H1 (cell line): ENCODE measurements at regions of chr5 and their contacts with region 1.

Region 1: DNA sequence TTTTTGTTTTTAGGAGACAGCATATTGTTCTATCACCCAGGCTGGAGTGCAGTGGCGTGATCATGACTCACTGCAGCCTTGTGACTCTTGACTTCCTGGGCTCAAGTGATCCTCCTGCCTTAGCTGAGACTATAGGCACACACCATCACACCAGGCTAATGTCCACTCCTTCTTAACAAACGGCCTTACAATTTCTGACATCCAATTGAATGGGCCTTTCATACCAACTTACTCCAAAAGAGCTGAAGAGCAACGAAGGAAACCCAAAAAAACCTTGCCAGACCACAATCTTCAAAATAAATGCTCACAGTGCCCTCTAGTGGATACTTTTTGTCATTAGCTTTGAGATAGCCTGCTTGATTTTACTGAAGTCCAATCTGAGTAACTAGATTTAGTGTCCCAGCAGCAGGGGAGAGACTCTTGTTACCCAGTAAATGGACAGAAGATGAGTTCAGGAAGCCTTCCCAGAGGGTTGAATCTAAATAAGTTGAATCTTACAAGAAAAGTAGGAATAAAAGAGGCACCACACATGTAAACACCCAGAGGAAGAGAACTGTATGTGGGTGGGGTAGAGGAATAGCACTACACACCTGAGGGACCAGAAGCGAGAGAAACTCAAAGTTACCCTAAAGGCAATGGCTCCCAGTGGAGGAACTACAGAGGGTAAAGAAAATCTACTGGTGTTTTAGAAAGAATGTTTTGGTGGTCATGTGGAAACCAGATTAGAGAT is 9.3 kb downstream of the ZNF622 start:
- DNase-seq: no peak
- H3K4me3 ChIP-seq: no peak overlapping the region
- H3K27ac ChIP-seq: no peak overlapping the region
- H3K4me1 ChIP-seq: peaks cover 0 to 3% (median 0%) of the 10 kb centered on the region in 4 experiments; a peak in 1 of 7 replicates
- H3K27me3 ChIP-seq: no peaks in the 10 kb centered on the region
- CTCF ChIP-seq: peak in 2 of 3 experiments; percentile 56 to 63; a peak in 3 of 4 replicates
- EP300 ChIP-seq: no peak
- POLR2A ChIP-seq: no peak
- RAD21 ChIP-seq: peak; percentile 85 to 87

Region 2: DNA sequence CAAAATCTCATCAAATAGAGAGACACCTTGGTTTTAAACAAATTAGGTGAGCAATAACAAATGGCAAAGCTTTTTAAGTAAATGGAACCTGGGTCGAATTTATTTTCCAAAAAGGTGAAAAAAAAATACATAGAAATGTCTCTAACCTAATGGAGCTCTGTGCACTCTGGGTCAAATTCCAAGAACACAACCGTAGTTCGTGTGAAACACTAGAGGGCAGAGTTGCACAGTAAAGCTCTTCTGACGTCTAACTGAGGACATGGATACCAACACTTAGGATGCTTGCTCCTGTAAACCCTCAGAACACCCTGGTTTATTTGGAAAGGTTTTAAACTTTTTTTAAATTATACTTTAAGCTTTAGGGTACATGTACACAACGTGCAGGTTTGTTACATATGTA is 295.6 kb before region 1 on chr5:
- CTCF ChIA-PET with region 1: interaction called, 125 read pairs
- POLR2A ChIA-PET with region 1: no interaction called
- DNase-seq: no peak
- H3K4me3 ChIP-seq: no peak overlapping the region
- H3K27ac ChIP-seq: no peak overlapping the region
- H3K4me1 ChIP-seq: no peaks in the 10 kb centered on the region
- H3K27me3 ChIP-seq: no peaks in the 10 kb centered on the region
- CTCF ChIP-seq: peak in 2 of 3 experiments; percentile 74 to 76; a peak in 3 of 4 replicates
- EP300 ChIP-seq: no peak
- POLR2A ChIP-seq: no peak
- RAD21 ChIP-seq: peak; percentile 92 to 95

Region 3: GRCh38 chr5:16207908-16208307 is 248.4 kb before region 1 on chr5:
- CTCF ChIA-PET with region 1: interaction called, 12 read pairs
- POLR2A ChIA-PET with region 1: no interaction called
- DNase-seq: no peak
- H3K4me3 ChIP-seq: no peak overlapping the region
- H3K27ac ChIP-seq: no peak overlapping the region
- H3K4me1 ChIP-seq: no peaks in the 10 kb centered on the region
- H3K27me3 ChIP-seq: no peaks in the 10 kb centered on the region
- CTCF ChIP-seq: no peak
- EP300 ChIP-seq: no peak
- POLR2A ChIP-seq: no peak
- RAD21 ChIP-seq: no peak

Region 4: DNA sequence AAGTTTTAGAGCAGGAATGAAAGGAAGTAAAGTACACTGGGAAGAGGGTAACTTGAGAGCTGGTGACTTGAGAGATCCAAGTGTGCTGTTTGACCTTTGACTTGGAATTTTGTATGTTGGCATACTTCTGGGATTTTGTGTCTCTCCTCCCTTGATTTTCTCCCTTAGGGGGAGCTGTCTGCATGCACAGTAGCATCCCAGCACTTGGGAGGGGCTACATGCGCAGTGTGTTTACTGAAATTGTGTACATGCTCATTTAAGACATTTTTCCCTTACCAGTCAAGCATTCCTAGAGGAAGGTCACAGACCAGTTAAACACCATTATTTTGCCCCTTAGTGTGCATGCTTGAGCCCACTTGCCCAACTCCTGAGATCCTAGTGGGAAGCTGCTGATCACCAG is 110.8 kb before region 1 on chr5:
- CTCF ChIA-PET with region 1: interaction called, 33 read pairs
- POLR2A ChIA-PET with region 1: no interaction called
- DNase-seq: no peak
- H3K4me3 ChIP-seq: no peak overlapping the region
- H3K27ac ChIP-seq: no peak overlapping the region
- H3K4me1 ChIP-seq: no peaks in the 10 kb centered on the region
- H3K27me3 ChIP-seq: no peaks in the 10 kb centered on the region
- CTCF ChIP-seq: peak; percentile 27 to 50 (median 29); a peak in 3 of 4 replicates
- EP300 ChIP-seq: no peak
- POLR2A ChIP-seq: no peak
- RAD21 ChIP-seq: peak; percentile 63 to 72

Region 5: DNA sequence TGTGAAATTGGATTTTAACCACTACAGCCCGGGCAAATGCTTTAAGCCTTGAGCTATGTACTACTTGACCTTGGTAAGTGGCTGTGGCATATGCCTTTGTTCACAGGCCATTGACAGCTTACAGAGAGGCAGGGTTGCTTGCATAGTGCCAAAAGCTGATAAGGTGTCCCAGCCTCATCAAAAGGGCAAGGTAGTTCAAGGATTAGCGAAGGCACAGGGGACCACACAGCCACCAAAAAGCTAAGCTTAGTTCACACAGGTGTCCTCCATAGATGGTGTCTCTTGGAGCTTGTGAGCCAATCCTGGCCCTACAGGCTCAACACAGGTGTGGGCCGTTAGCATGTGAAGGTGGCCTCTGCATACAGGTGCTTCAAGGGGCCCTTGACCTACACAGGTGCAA is 77.5 kb before region 1 on chr5:
- CTCF ChIA-PET with region 1: interaction called, 13 read pairs
- POLR2A ChIA-PET with region 1: no interaction called
- DNase-seq: no peak
- H3K4me3 ChIP-seq: no peak overlapping the region
- H3K27ac ChIP-seq: no peak overlapping the region
- H3K4me1 ChIP-seq: no peaks in the 10 kb centered on the region
- H3K27me3 ChIP-seq: no peaks in the 10 kb centered on the region
- CTCF ChIP-seq: no peak
- EP300 ChIP-seq: no peak
- POLR2A ChIP-seq: no peak
- RAD21 ChIP-seq: no peak

Region 6: DNA sequence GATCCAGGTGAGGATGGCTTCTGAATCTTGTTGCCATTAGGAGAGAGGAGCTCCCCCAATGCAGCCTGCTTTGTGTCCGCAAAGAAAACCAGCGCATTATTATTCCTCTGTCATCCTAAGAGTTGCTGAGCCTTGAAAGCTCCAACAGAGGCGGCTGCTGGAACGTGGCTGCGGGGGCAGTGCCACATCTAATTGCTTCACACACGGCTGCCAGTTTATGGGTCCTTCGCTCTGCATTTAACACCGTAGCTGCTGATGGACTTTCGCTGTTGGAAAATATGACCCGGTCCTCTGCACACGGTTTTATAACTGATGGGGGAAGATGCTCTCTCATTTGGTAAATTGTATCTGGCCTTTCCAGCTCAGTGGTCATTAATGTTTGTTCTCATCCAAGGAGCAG is 28.7 kb before region 1 on chr5:
- CTCF ChIA-PET with region 1: interaction called, 11 read pairs
- POLR2A ChIA-PET with region 1: no interaction called
- DNase-seq: no peak
- H3K4me3 ChIP-seq: no peak overlapping the region
- H3K27ac ChIP-seq: no peak overlapping the region
- H3K4me1 ChIP-seq: peaks cover 2 to 16% (median 5%) of the 10 kb centered on the region in 4 experiments; a peak in 6 of 7 replicates
- H3K27me3 ChIP-seq: no peaks in the 10 kb centered on the region
- CTCF ChIP-seq: no peak
- EP300 ChIP-seq: no peak
- POLR2A ChIP-seq: no peak
- RAD21 ChIP-seq: no peak

Region 7: GRCh38 chr5:16437974-16438373 is 18.3 kb before region 1 on chr5:
- CTCF ChIA-PET with region 1: interaction called, 19 read pairs
- POLR2A ChIA-PET with region 1: no interaction called
- DNase-seq: no peak
- H3K4me3 ChIP-seq: no peak overlapping the region
- H3K27ac ChIP-seq: no peak overlapping the region
- H3K4me1 ChIP-seq: no peaks in the 10 kb centered on the region
- H3K27me3 ChIP-seq: no peaks in the 10 kb centered on the region
- CTCF ChIP-seq: no peak; a peak in 1 of 4 replicates
- EP300 ChIP-seq: no peak
- POLR2A ChIP-seq: no peak
- RAD21 ChIP-seq: peak in 1 of 2 experiments; percentile 11; a peak in 1 of 4 replicates